Posterior cingulate gyrus (tissue), 11 donors: ENCODE measurements at regions of chr17 and their contacts with region 1.

Region 1: GRCh38 chr17:35969558-35970380 is 11.5 kb downstream of the CCL16 start:
- DNase-seq: peak in 8 of 10 donors; percentile 32 to 93 (median 78)

Region 2: GRCh38 chr17:36066365-36066985 is 96.7 kb after region 1 on chr17:
- intact Hi-C with region 1: no loop called
- DNase-seq: no peak

Region 3: DNA sequence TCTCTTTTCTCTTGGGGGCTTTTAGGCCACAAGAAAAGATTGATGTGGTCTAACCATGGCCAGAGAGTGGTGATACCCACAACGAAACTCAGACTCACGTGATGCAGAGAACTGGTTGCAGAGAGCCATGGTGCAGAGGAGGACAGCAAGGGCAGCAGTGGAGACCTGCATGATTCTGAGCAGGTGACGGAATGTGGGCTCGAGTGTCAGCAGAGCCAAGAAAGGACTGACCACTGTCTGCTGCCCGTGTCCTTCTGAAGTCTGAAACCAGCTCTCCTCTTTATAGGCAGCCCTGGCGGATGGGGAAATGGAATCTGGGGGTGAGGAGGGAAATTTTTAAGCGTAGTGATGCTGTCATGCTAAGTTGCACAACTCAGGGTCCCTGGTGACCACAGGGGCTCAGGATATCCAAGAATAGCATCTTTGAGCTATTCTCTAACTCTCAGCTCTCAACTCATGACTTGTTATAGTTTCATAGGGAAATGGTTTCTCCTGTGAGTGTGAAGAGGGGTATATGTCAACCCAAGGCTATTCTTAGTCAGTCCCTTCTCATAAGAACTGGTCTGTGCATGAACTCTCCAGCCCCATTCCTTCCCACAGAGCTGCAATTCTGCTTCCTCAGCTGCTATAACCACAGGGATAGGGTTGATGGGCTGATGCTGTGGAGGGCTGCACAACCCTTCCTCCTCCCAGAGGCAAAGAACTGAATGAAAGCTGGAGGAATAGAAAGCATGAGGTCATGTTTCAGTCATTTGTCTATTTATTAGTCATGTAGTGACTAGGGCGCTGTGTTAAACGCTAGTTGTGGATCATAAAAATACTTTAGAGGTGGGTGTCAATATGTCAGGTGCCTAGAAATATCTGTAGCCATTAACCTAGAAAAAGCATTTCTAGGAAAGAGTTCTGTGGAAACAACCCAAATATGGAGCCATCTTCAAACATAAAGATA is 120.4 kb after region 1 on chr17 and contains the start of gene CCL3:
- intact Hi-C with region 1: no loop called
- DNase-seq: no peak

Region 4: DNA sequence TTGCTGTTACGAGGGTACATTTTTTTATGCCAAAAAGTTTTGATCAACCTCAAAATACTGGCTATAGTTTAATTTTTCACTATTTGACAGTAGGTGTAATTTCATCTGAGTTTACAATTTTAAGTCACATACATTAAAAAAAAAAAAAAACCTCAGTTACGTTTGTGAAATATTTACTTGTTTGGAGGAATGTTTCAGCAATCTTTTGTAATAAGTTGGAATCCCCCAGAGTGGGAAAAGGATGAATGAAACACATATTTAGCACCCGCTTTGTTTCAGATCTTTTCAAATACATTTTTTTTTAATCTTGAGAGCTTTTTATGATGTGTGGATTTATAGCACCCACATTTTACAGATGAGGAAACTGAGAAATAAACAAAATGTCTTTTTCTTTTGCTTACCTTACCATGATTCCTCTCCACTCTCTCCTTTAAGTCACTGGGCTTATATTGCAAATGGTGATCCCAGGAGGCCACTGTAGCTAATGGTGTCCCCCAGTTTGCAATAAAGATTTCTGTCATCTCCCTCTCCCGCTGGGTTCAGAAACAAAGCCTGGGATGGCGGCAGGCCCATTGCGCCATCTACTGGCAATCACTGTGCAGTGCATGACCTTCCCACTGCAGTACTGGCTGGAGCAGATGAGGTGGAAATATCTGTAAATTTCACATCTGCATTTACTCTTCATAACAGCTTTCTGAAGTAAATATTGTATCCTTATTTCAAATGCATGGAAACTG is 179.0 kb after region 1 on chr17:
- intact Hi-C with region 1: loop called (anchors 2 kb)
- DNase-seq: peak; percentile 49 to 93 (median 67)

Region 5: GRCh38 chr17:36212966-36213365 is 243.2 kb after region 1 on chr17:
- intact Hi-C with region 1: no loop called
- DNase-seq: no peak

Region 6: DNA sequence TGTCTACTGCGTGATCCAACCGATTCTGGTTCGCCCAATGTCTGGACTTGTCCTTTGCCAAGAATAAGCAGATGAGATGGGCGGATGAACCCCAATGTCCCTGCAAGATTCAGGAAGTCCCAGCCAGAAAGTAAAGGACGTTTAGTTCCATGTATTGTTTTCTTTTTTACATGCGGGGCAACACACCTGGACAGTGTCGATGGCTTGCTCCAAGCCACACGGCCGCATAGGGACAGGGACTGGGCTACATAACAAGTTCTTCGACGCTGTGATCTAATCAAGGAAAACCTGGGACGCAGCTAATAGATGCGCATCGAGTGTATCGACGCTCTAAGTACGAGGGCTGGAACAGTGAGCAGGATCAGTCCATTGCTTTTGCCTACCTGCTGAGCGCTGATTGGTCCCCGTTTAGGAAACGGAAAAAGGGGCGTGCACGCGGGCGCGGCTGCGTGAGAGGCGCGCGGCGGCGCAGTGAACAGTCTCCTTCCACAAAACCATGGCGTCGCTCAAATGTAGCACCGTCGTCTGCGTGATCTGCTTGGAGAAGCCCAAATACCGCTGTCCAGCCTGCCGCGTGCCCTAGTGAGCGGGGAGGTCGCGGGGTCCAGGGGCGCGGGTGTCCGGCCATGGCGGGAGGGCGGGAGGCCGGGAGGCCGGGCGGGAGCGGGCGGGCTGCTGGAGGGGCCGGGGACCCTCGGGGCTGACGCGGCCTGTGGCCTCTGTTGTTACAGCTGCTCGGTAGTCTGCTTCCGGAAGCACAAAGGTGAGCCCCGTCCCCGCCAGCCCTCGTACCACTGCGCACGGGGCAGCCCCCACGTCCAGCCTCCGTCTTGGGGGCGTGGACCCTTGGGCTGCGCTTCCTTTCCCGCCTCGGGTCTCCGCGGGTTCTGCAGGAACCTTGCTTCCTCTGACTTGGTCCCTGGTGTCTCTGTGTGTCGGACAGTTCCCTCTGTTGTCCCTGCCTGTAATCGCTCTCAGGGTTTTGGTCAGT is 516.7 kb after region 1 on chr17 and contains the start of gene ZNHIT3:
- intact Hi-C with region 1: loop called (anchors 1 kb)
- DNase-seq: peak; percentile 84 to 99 (median 92)